Endothelial cell of umbilical vein (primary cell): ENCODE measurements at regions of chr22 and their contacts with region 1.

Region 1: GRCh38 chr22:18024276-18024947 is at the start of gene MICAL3:
- DNase-seq: peak; percentile 64
- H3K4me3 ChIP-seq: peak within 1 kb of the TSS; percentile 41 to 61 (median 48)
- H3K27ac ChIP-seq: no peak within 1 kb of the TSS
- H3K4me1 ChIP-seq: peaks cover 13% of the 10 kb centered on the region
- H3K27me3 ChIP-seq: peaks cover 12 to 33% of the 10 kb centered on the region in 2 experiments
- CTCF ChIP-seq: peak; percentile 73 to 76
- POLR2A ChIP-seq: no peak
- total RNA-seq, gene MICAL3: 63.4 and 63.7 TPM in 2 replicates

Region 2: GRCh38 chr22:17451316-17451715 is 573.1 kb before region 1 on chr22:
- CTCF ChIA-PET with region 1: no interaction called
- POLR2A ChIA-PET with region 1: no interaction called
- dilution Hi-C with region 1: no loop called
- intact Hi-C with region 1: no loop called
- DNase-seq: no peak
- H3K4me3 ChIP-seq: no peak overlapping the region
- H3K27ac ChIP-seq: no peak overlapping the region
- H3K4me1 ChIP-seq: no peaks in the 10 kb centered on the region
- H3K27me3 ChIP-seq: no peaks in the 10 kb centered on the region
- CTCF ChIP-seq: no peak
- POLR2A ChIP-seq: no peak

Region 3: GRCh38 chr22:17742527-17742902 is 281.9 kb before region 1 on chr22:
- CTCF ChIA-PET with region 1: interaction called, 3 read pairs
- POLR2A ChIA-PET with region 1: no interaction called
- dilution Hi-C with region 1: no loop called
- intact Hi-C with region 1: loop called (anchors 2 kb)
- DNase-seq: peak; percentile 49
- H3K4me3 ChIP-seq: no peak overlapping the region
- H3K27ac ChIP-seq: no peak overlapping the region
- H3K4me1 ChIP-seq: no peaks in the 10 kb centered on the region
- H3K27me3 ChIP-seq: no peaks in the 10 kb centered on the region
- CTCF ChIP-seq: peak; percentile 66 to 88
- POLR2A ChIP-seq: no peak

Region 4: DNA sequence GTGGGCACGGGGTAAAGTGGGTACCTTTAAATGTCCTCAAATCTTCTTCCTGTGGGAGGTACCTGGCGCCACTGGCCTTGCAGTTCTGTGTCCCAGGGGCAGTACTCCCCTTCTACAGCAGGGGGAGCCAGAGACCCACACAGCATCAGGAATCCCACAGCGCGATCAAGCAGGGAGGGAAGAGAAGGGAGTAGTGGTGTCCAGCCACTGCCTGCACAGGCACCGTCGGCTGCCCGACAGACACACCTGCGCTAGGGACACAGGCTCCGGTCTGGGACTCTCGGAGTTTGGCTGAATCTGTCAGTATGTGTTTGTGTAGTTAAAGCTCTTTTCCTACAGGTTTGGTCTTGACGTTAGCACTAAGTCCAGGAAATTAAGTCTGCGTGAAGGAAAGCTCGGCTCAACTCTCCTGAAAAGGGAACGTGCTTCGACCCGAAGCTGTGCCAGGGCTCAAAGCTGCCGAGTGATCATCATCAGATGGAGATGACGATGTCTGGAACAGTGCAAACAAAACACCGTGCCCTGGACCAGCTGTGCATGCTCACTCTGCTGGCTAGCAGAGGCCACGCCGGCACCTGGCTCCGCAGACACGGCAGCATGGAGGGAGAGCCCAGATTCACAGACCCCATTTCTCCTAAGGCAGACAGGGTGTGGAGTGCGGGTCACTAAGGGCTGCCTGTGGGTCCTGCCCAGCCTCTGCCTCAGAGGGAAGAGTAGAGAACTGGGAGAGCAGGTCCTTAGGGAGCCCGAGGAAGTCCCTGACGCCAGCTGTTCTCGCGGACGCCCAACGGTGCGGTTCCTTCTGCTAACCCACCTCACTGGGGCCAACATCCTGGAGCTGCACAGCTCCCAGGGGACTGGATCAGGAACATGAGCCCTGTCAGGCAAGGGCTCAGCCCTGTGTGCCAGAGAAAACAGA is 194.1 kb before region 1 on chr22:
- CTCF ChIA-PET with region 1: interaction called, 16 read pairs
- POLR2A ChIA-PET with region 1: no interaction called
- dilution Hi-C with region 1: no loop called
- intact Hi-C with region 1: loop called (anchors 1 kb)
- DNase-seq: peak; percentile 82
- H3K4me3 ChIP-seq: no peak overlapping the region
- H3K27ac ChIP-seq: no peak overlapping the region
- H3K4me1 ChIP-seq: no peaks in the 10 kb centered on the region
- H3K27me3 ChIP-seq: no peaks in the 10 kb centered on the region
- CTCF ChIP-seq: peak; percentile 97
- POLR2A ChIP-seq: no peak

Region 5: GRCh38 chr22:17891481-17892167 is 132.8 kb before region 1 on chr22:
- CTCF ChIA-PET with region 1: interaction called, 19 read pairs
- POLR2A ChIA-PET with region 1: no interaction called
- dilution Hi-C with region 1: no loop called
- intact Hi-C with region 1: loop called (anchors 5 kb)
- DNase-seq: no peak
- H3K4me3 ChIP-seq: no peak overlapping the region
- H3K27ac ChIP-seq: no peak overlapping the region
- H3K4me1 ChIP-seq: no peaks in the 10 kb centered on the region
- H3K27me3 ChIP-seq: no peaks in the 10 kb centered on the region
- CTCF ChIP-seq: no peak
- POLR2A ChIP-seq: no peak

Region 6: GRCh38 chr22:17910561-17911311 is 113.7 kb before region 1 on chr22:
- CTCF ChIA-PET with region 1: interaction called, 9 read pairs
- POLR2A ChIA-PET with region 1: no interaction called
- dilution Hi-C with region 1: no loop called
- intact Hi-C with region 1: loop called (anchors 1 kb)
- DNase-seq: peak; percentile 94
- H3K4me3 ChIP-seq: no peak overlapping the region
- H3K27ac ChIP-seq: peak overlapping the region; percentile 69
- H3K4me1 ChIP-seq: peaks cover 20% of the 10 kb centered on the region
- H3K27me3 ChIP-seq: no peaks in the 10 kb centered on the region
- CTCF ChIP-seq: peak; percentile 13 to 40
- POLR2A ChIP-seq: no peak

Region 7: GRCh38 chr22:17950651-17951214 is 73.7 kb before region 1 on chr22:
- CTCF ChIA-PET with region 1: no interaction called
- POLR2A ChIA-PET with region 1: no interaction called
- dilution Hi-C with region 1: no loop called
- intact Hi-C with region 1: no loop called
- DNase-seq: peak; percentile 41
- H3K4me3 ChIP-seq: no peak overlapping the region
- H3K27ac ChIP-seq: peak overlapping the region; percentile 62
- H3K4me1 ChIP-seq: peaks cover 17% of the 10 kb centered on the region
- H3K27me3 ChIP-seq: no peaks in the 10 kb centered on the region
- CTCF ChIP-seq: no peak
- POLR2A ChIP-seq: no peak

Region 8: GRCh38 chr22:18001040-18001893 is 23.1 kb before region 1 on chr22:
- CTCF ChIA-PET with region 1: interaction called, 10 read pairs
- POLR2A ChIA-PET with region 1: no interaction called
- dilution Hi-C with region 1: no loop called
- intact Hi-C with region 1: no loop called
- DNase-seq: peak; percentile 96
- H3K4me3 ChIP-seq: peak overlapping the region; percentile 45 to 86 (median 82)
- H3K27ac ChIP-seq: peak overlapping the region; percentile 64
- H3K4me1 ChIP-seq: peaks cover 5% of the 10 kb centered on the region
- H3K27me3 ChIP-seq: no peaks in the 10 kb centered on the region
- CTCF ChIP-seq: peak; percentile 31 to 41
- POLR2A ChIP-seq: peak; percentile 89

Region 9: GRCh38 chr22:18088825-18089568 is 64.6 kb after region 1 on chr22:
- CTCF ChIA-PET with region 1: no interaction called
- POLR2A ChIA-PET with region 1: no interaction called
- dilution Hi-C with region 1: no loop called
- intact Hi-C with region 1: no loop called
- DNase-seq: no peak
- H3K4me3 ChIP-seq: no peak overlapping the region
- H3K27ac ChIP-seq: no peak overlapping the region
- H3K4me1 ChIP-seq: peaks cover 14% of the 10 kb centered on the region
- H3K27me3 ChIP-seq: no peaks in the 10 kb centered on the region
- CTCF ChIP-seq: no peak
- POLR2A ChIP-seq: no peak